Left lung (tissue), 14 donors: ENCODE measurements at regions of chr7 and their contacts with region 1.

Region 1: DNA sequence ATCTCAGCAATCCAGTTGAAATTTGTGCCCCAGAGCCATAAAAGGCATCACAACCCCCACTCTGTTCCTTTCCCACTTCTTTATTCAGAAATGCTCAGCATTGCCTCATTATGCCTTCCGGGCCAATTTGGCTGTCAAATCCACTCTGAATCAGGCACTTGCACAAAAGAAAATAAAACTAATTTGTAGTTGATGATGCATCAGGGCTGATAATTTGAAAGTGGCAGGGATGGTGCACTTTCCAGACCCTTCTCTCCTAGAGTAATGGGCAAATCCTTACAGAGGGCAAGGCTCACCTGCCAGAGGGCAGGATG is 147.9 kb upstream of the PDE1C start:
- DNase-seq: no peak
- ATAC-seq: no peak
- H3K4me3 ChIP-seq: no peak overlapping the region
- H3K27ac ChIP-seq: no peak overlapping the region
- H3K4me1 ChIP-seq: no peaks in the 10 kb centered on the region
- H3K27me3 ChIP-seq: peaks cover 0 to 9% of the 10 kb centered on the region in 2 donors
- CTCF ChIP-seq: no peak

Region 2: GRCh38 chr7:32001948-32002347 is 216.2 kb before region 1 on chr7:
- intact Hi-C with region 1: no loop called
- DNase-seq: no peak
- ATAC-seq: no peak
- H3K4me3 ChIP-seq: no peak overlapping the region
- H3K27ac ChIP-seq: no peak overlapping the region
- H3K4me1 ChIP-seq: no peaks in the 10 kb centered on the region
- H3K27me3 ChIP-seq: no peaks in the 10 kb centered on the region
- CTCF ChIP-seq: no peak

Region 3: GRCh38 chr7:32335107-32335506 is 117.0 kb after region 1 on chr7:
- intact Hi-C with region 1: no loop called
- DNase-seq: no peak
- ATAC-seq: no peak
- H3K4me3 ChIP-seq: no peak overlapping the region
- H3K27ac ChIP-seq: no peak overlapping the region
- H3K4me1 ChIP-seq: no peaks in the 10 kb centered on the region
- H3K27me3 ChIP-seq: no peaks in the 10 kb centered on the region
- CTCF ChIP-seq: no peak

Region 4: GRCh38 chr7:32479574-32480200 is 261.6 kb after region 1 on chr7:
- intact Hi-C with region 1: loop called in 1 of 2 experiments (anchors 10 kb)
- DNase-seq: peak in 1 of 4 donors; percentile 16
- ATAC-seq: peak; percentile 61
- H3K4me3 ChIP-seq: no peak overlapping the region
- H3K27ac ChIP-seq: no peak overlapping the region
- H3K4me1 ChIP-seq: no peaks in the 10 kb centered on the region
- H3K27me3 ChIP-seq: peaks cover 0 to 5% of the 10 kb centered on the region in 2 donors
- CTCF ChIP-seq: peak; percentile 18 to 77